ENCODE measurements at regions of chr9 and their contacts with region 1.

Region 1: GRCh38 chr9:137295238-137295811 is 6.7 kb downstream of the NRARP start:
- DNase-seq: peak; percentile 42
- H3K4me3 Mint-ChIP-seq: no peak overlapping the region
- H3K27ac Mint-ChIP-seq: no peak overlapping the region
- H3K4me1 Mint-ChIP-seq: peaks cover 8% of the 10 kb centered on the region
- H3K27me3 Mint-ChIP-seq: peaks cover 46% of the 10 kb centered on the region

Region 2: GRCh38 chr9:137277329-137278041 is 17.8 kb before region 1 on chr9 and contains the start of gene TOR4A:
- intact Hi-C with region 1: no loop called
- DNase-seq: peak; percentile 34
- H3K4me3 Mint-ChIP-seq: peak within 1 kb of the TSS; percentile 91
- H3K27ac Mint-ChIP-seq: peak within 1 kb of the TSS; percentile 79
- H3K4me1 Mint-ChIP-seq: peaks cover 11% of the 10 kb centered on the region
- H3K27me3 Mint-ChIP-seq: no peaks in the 10 kb centered on the region
- total RNA-seq, gene TOR4A: 11.6 and 11.7 TPM in 2 replicates

Region 3: DNA sequence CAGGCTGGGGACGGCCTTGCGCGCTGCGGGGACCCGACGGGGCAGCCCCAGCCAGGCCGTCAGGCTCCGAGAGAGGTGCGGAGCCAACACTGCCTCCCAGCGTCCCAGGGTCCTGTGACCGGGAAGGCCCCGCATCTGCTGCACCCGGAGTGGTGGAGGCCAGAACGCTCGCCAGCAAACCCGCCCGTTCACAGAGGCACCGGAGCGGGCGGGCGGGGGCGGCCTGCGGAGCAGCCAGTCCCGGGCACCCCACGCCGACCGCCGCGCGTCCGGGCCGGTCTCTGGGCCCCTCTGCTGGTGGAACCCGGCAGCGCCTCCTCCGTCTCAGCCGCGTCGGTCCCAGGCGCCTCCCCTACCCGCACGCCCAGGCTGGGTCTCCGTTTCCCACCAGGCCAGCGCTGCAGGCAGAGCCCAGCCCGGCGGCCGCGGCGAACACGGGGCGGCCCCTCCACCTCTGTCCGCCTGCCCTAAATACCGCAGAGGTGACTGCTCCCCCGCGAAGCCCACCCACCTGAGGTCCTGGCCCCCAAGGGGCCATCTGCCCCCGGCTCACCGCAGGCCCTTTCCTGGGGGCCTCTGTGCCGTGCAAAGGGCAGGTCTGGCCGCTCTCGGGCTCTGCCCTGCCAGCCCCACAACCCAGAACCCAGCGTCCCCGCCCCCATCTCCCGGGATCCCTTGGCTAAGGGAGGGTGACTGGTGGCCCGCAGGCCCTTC is 111.7 kb after region 1 on chr9:
- intact Hi-C with region 1: loop called (anchors 1 kb)
- DNase-seq: peak; percentile 56
- H3K4me3 Mint-ChIP-seq: no peak overlapping the region
- H3K27ac Mint-ChIP-seq: no peak overlapping the region
- H3K4me1 Mint-ChIP-seq: no peaks in the 10 kb centered on the region
- H3K27me3 Mint-ChIP-seq: peaks cover 3% of the 10 kb centered on the region

Region 4: DNA sequence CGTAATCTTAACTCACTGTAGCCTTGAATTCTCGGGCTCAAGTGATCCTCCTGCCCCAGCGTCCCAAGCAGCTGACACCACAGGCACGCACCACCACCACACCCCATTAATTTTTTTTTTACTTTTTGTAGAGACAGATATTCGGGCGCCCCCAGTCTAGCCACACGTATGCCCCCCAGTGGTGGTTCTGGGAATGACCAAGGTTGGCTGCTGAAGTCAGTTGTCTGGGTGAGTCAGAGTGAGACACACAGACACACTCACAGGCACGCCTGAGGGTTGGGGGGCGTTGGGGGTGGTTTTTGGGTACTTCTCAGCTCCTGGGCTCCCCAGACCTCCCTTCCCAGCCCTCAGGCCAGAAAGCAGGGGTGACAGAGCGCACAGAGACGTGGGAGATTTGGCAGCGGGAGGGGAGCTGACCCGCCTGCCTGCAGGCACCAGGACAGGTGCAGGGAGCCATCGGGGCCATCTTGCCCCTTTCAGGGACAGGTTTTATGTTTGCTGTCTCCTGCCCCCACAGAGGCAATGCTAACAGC is 150.0 kb after region 1 on chr9:
- intact Hi-C with region 1: loop called (anchors 1 kb)
- DNase-seq: peak; percentile 78
- H3K4me3 Mint-ChIP-seq: no peak overlapping the region
- H3K27ac Mint-ChIP-seq: peak overlapping the region; percentile 58
- H3K4me1 Mint-ChIP-seq: peaks cover 13% of the 10 kb centered on the region
- H3K27me3 Mint-ChIP-seq: peaks cover 18% of the 10 kb centered on the region